ENCODE measurements at regions of chr3 and their contacts with region 1.

Region 1: DNA sequence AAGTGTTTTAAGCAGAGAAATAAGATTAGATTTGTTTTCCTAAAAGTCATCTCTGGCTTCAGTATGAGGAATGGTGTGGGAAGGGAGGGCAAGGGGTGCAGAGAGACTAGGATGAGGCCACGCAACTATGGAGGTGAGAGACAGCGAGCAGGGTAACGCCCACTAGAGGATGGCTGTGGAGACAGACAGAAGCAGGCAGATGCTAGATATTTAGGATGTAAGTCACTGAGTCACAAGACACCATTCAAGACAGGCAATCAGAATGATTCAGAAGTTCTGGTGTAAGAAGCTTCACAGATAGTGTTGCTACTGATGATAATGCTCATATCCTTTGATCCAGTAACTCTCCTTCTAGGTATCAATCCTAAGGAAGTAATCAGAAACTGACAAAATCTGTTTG is 19.1 kb downstream of the HSPBAP1 start:
- DNase-seq: peak; percentile 12
- CTCF ChIP-seq: no peak

Region 2: DNA sequence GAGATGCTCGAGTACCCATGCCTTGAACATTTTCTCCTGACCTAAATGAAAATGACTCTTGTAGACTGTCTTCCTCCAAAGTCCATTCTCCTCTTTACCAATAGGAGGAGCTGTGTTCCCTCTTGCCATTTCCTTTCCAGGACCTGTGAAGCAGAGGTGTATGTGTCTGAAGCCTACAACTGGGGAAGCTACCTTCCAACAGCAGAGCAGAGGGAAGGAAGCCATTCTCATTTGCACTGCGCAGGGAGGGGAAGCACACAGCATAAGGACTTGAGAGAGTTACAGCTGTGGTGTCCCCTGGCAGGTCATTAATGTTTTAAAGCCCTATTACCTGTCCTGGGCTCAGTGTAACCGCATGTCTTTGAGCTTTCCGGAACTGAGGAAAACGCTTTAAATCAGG is 19.6 kb before region 1 on chr3:
- CTCF ChIA-PET with region 1: interaction called, 24 read pairs
- POLR2A ChIA-PET with region 1: no interaction called
- DNase-seq: peak; percentile 58
- CTCF ChIP-seq: peak; percentile 65

Region 3: DNA sequence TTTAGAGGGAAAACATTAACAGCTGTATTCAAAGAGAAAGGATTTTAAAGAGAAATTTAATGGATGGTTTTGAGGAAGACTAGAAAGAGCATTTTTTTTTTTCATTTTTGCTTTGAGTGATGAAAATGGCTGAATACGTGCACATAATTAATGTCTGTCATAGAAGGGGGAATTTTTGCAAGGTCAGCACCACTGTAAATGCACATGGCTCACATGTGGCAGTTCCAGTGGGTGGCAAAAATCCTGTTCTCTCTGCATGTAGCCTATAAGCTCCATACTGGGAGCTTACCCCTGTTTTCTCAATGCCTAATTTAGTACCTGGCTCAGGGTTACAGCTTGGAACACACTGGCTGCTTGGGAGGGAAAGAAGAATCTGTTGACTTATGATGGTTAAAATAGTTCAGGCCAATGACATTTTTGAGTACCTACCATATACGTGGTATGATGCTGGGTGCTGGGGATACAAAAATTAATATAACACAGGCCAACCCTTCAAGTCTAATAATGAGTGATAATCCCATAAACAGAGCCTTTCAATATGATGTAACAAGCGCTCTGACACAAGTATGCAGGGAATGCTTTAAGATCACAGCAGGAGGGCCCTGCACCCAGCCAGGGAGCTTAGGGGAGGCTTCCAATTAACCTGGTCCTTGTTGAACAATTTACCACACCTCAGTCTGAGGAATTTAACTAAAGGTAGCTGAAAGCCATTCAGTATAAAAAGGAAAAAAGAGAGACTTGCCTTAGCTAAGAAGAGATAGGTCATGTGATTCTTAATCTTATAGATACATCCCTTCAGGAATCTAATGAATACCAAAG is 13.9 kb before region 1 on chr3:
- CTCF ChIA-PET with region 1: interaction called, 24 read pairs
- POLR2A ChIA-PET with region 1: no interaction called
- DNase-seq: no peak
- CTCF ChIP-seq: no peak

Measured in GM10248 (cell line).